AG04450 (cell line): ENCODE measurements at regions of chr12 and their contacts with region 1.

Region 1: DNA sequence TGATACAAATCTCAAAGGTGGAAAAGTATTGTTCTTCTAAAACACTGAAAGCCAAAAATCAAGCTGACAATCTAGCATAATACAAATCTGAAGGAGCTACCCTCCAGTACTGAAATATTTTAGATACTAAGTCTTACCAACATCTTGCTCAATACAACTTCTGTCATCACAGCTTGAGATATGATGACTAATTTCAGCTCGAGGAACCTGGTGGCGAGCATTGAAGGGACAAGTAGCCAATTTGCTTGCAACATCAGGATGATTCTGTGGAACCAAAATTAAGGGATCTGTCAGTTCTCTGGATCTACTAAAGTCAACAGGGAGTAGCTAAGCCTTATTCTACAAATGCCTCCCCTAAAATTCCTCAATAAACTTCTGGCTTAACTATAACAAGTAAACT is 10.4 kb downstream of the GTSF1 start:
- DNase-seq: no peak
- H3K4me3 ChIP-seq: no peak overlapping the region
- H3K27ac ChIP-seq: no peak overlapping the region
- H3K27me3 ChIP-seq: peaks cover 44% of the 10 kb centered on the region
- CTCF ChIP-seq: no peak

Region 2: GRCh38 chr12:54603173-54603814 is 140.3 kb after region 1 on chr12:
- CTCF ChIA-PET with region 1: interaction called, 13 read pairs
- POLR2A ChIA-PET with region 1: no interaction called
- DNase-seq: peak; percentile 18
- H3K4me3 ChIP-seq: no peak overlapping the region
- H3K27ac ChIP-seq: no peak overlapping the region
- H3K27me3 ChIP-seq: peaks cover 13% of the 10 kb centered on the region
- CTCF ChIP-seq: peak; percentile 85